ENCODE measurements at regions of chr11 and their contacts with region 1.

Region 1: GRCh38 chr11:65506770-65507505 is 8.1 kb downstream of the MALAT1 start:
- DNase-seq: peak; percentile 79
- ATAC-seq: peak; percentile 61
- H3K4me3 ChIP-seq: peak overlapping the region in 1 of 5 experiments; percentile 99
- H3K4me3 Mint-ChIP-seq: no peak overlapping the region
- H3K27ac ChIP-seq: peak overlapping the region; percentile 65 to 99
- H3K27ac Mint-ChIP-seq: peak overlapping the region; percentile 78
- H3K4me1 ChIP-seq: peaks cover 45 to 56% of the 10 kb centered on the region in 2 donors
- H3K4me1 Mint-ChIP-seq: peaks cover 56% of the 10 kb centered on the region
- H3K27me3 ChIP-seq: no peaks in the 10 kb centered on the region
- H3K27me3 Mint-ChIP-seq: no peaks in the 10 kb centered on the region
- CTCF ChIP-seq: no peak

Region 2: GRCh38 chr11:65274735-65275682 is 231.9 kb before region 1 on chr11:
- CTCF ChIA-PET with region 1: interaction called, 54 read pairs
- POLR2A ChIA-PET with region 1: no interaction called
- intact Hi-C with region 1: loop called (anchors 1 kb)
- DNase-seq: peak; percentile 57
- ATAC-seq: peak; percentile 53
- H3K4me3 ChIP-seq: no peak overlapping the region
- H3K4me3 Mint-ChIP-seq: no peak overlapping the region
- H3K27ac ChIP-seq: no peak overlapping the region
- H3K27ac Mint-ChIP-seq: no peak overlapping the region
- H3K4me1 ChIP-seq: no peaks in the 10 kb centered on the region
- H3K4me1 Mint-ChIP-seq: no peaks in the 10 kb centered on the region
- H3K27me3 ChIP-seq: no peaks in the 10 kb centered on the region
- H3K27me3 Mint-ChIP-seq: no peaks in the 10 kb centered on the region
- CTCF ChIP-seq: peak; percentile 50

Region 3: DNA sequence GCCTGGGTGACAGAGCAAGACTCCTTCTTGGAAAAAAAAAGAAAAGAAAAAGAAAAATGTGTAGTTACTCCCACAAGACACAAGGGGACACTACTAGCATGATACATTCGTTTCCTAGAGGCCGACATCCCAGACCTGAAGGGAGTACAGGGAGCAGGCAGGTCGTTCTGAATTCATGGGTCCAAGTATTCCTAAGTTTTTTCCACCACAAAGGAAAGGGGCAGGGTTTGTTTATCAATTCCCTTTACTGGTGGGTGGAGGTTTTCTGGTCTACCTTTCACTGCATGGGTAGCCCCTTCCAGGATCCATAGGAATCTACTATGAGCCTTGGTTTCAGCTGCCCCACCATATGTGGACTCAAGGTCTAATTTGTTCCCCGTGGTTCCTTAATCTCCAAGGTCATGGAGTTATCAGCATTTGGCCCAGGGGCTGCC is 140.6 kb before region 1 on chr11:
- CTCF ChIA-PET with region 1: interaction called, 82 read pairs
- POLR2A ChIA-PET with region 1: interaction called, 5 read pairs
- intact Hi-C with region 1: loop called (anchors 1 kb)
- DNase-seq: peak; percentile 73
- ATAC-seq: peak; percentile 58
- H3K4me3 ChIP-seq: no peak overlapping the region
- H3K4me3 Mint-ChIP-seq: no peak overlapping the region
- H3K27ac ChIP-seq: no peak overlapping the region
- H3K27ac Mint-ChIP-seq: no peak overlapping the region
- H3K4me1 ChIP-seq: peaks cover 17 to 33% of the 10 kb centered on the region in 2 donors
- H3K4me1 Mint-ChIP-seq: peaks cover 21% of the 10 kb centered on the region
- H3K27me3 ChIP-seq: no peaks in the 10 kb centered on the region
- H3K27me3 Mint-ChIP-seq: no peaks in the 10 kb centered on the region
- CTCF ChIP-seq: peak; percentile 81

Region 4: DNA sequence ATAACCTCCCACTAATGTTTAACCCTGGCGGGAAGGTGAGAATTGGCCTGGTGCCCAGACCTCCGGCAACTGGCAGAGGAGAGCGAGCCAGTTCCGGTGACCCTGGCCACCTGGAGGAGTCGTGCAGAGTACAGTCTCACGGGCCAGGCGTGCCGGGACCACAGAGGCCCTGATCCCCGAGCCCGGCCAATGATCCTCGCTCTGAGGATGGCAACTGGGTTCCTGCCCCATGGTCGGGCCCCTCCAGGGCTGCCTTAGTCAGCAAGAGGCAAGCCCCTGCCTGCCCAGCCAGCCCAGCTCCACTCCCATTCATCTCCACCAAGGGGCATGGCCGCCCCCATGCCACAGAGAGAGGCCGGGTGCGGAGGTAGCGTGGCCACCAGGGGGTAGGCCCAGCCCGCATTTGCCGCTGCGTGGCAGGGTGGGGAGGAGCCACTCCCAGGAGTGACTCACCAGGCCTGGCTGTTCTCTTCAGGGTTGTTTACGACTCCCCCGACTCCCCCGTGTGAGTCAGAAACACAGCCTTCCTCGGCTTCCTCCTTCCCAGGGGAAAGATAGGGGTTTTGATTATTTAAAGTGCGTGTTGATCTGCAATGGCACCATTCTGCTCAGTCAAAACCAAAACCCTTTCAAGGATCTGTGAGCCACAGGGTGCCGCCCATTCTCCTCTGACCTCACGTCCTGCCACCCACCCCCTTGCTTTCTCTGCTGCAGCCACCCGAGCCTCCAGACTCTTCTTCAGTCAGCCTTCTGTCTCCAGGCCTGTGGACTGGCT is 124.7 kb before region 1 on chr11 and contains the start of gene SLC25A45:
- CTCF ChIA-PET with region 1: interaction called, 252 read pairs
- POLR2A ChIA-PET with region 1: interaction called, 56 read pairs
- intact Hi-C with region 1: loop called (anchors 1 kb)
- DNase-seq: peak; percentile 93
- ATAC-seq: peak; percentile 83
- H3K4me3 ChIP-seq: peak within 1 kb of the TSS; percentile 44 to 81 (median 61)
- H3K4me3 Mint-ChIP-seq: peak within 1 kb of the TSS; percentile 92
- H3K27ac ChIP-seq: peak within 1 kb of the TSS; percentile 91
- H3K27ac Mint-ChIP-seq: peak within 1 kb of the TSS; percentile 98
- H3K4me1 ChIP-seq: peaks cover 35 to 71% of the 10 kb centered on the region in 2 donors
- H3K4me1 Mint-ChIP-seq: peaks cover 63% of the 10 kb centered on the region
- H3K27me3 ChIP-seq: no peaks in the 10 kb centered on the region
- H3K27me3 Mint-ChIP-seq: no peaks in the 10 kb centered on the region
- CTCF ChIP-seq: peak; percentile 85
- total RNA-seq, gene SLC25A45: 16.4 and 18.2 TPM in 2 replicates

Region 5: GRCh38 chr11:65403607-65404121 is 103.3 kb before region 1 on chr11:
- CTCF ChIA-PET with region 1: interaction called, 7 read pairs
- POLR2A ChIA-PET with region 1: interaction called, 16 read pairs
- intact Hi-C with region 1: no loop called
- DNase-seq: peak; percentile 91
- ATAC-seq: peak; percentile 68
- H3K4me3 ChIP-seq: peak overlapping the region in 2 of 5 experiments; percentile 10 to 22
- H3K4me3 Mint-ChIP-seq: peak overlapping the region; percentile 71
- H3K27ac ChIP-seq: peak overlapping the region; percentile 81 to 86
- H3K27ac Mint-ChIP-seq: peak overlapping the region; percentile 96
- H3K4me1 ChIP-seq: peaks cover 34 to 57% of the 10 kb centered on the region in 2 donors
- H3K4me1 Mint-ChIP-seq: peaks cover 40% of the 10 kb centered on the region
- H3K27me3 ChIP-seq: no peaks in the 10 kb centered on the region
- H3K27me3 Mint-ChIP-seq: no peaks in the 10 kb centered on the region
- CTCF ChIP-seq: no peak

Region 6: GRCh38 chr11:65558002-65558931 is 51.3 kb after region 1 on chr11 and contains the start of gene LTBP3:
- CTCF ChIA-PET with region 1: no interaction called
- POLR2A ChIA-PET with region 1: no interaction called
- intact Hi-C with region 1: no loop called
- DNase-seq: peak; percentile 52
- ATAC-seq: peak; percentile 60
- H3K4me3 ChIP-seq: peak within 1 kb of the TSS; percentile 22 to 62 (median 54)
- H3K4me3 Mint-ChIP-seq: peak within 1 kb of the TSS; percentile 81
- H3K27ac ChIP-seq: peak within 1 kb of the TSS; percentile 57 to 62
- H3K27ac Mint-ChIP-seq: peak within 1 kb of the TSS; percentile 68
- H3K4me1 ChIP-seq: peaks cover 11 to 33% of the 10 kb centered on the region in 2 donors
- H3K4me1 Mint-ChIP-seq: peaks cover 28% of the 10 kb centered on the region
- H3K27me3 ChIP-seq: no peaks in the 10 kb centered on the region
- H3K27me3 Mint-ChIP-seq: peaks cover 3% of the 10 kb centered on the region
- CTCF ChIP-seq: no peak
- total RNA-seq, gene LTBP3: 69.0 and 69.7 TPM in 2 replicates

Region 7: GRCh38 chr11:65588199-65589054 is 81.5 kb after region 1 on chr11:
- CTCF ChIA-PET with region 1: interaction called, 13 read pairs
- POLR2A ChIA-PET with region 1: interaction called, 3 read pairs
- intact Hi-C with region 1: no loop called
- DNase-seq: peak; percentile 87
- ATAC-seq: peak; percentile 76
- H3K4me3 ChIP-seq: peak overlapping the region in 3 of 5 experiments; percentile 9 to 26 (median 13)
- H3K4me3 Mint-ChIP-seq: peak overlapping the region; percentile 75
- H3K27ac ChIP-seq: peak overlapping the region; percentile 82 to 92
- H3K27ac Mint-ChIP-seq: peak overlapping the region; percentile 93
- H3K4me1 ChIP-seq: peaks cover 27 to 41% of the 10 kb centered on the region in 2 donors
- H3K4me1 Mint-ChIP-seq: peaks cover 38% of the 10 kb centered on the region
- H3K27me3 ChIP-seq: no peaks in the 10 kb centered on the region
- H3K27me3 Mint-ChIP-seq: no peaks in the 10 kb centered on the region
- CTCF ChIP-seq: peak; percentile 83

Measured in B cell (primary cell).